ENCODE measurements at regions of chr5 and their contacts with region 1.

Region 1: GRCh38 chr5:148730943-148731861 is 76.9 kb upstream of the HTR4 start:
- DNase-seq: no peak
- H3K4me3 ChIP-seq: no peak overlapping the region
- H3K27ac ChIP-seq: no peak overlapping the region
- H3K4me1 ChIP-seq: peaks cover 0 to 23% (median 20%) of the 10 kb centered on the region in 4 donors
- H3K27me3 ChIP-seq: no peaks in the 10 kb centered on the region
- CTCF ChIP-seq: peak; percentile 83 to 95 (median 92)
- EP300 ChIP-seq: no peak
- POLR2A ChIP-seq: no peak

Region 2: GRCh38 chr5:147857302-147858129 is 873.7 kb before region 1 on chr5:
- intact Hi-C with region 1: loop called (anchors 5 kb)
- DNase-seq: no peak
- H3K4me3 ChIP-seq: no peak overlapping the region
- H3K27ac ChIP-seq: no peak overlapping the region
- H3K4me1 ChIP-seq: no peaks in the 10 kb centered on the region
- H3K27me3 ChIP-seq: no peaks in the 10 kb centered on the region
- CTCF ChIP-seq: peak; percentile 54 to 81 (median 77)
- EP300 ChIP-seq: no peak
- POLR2A ChIP-seq: no peak

Region 3: DNA sequence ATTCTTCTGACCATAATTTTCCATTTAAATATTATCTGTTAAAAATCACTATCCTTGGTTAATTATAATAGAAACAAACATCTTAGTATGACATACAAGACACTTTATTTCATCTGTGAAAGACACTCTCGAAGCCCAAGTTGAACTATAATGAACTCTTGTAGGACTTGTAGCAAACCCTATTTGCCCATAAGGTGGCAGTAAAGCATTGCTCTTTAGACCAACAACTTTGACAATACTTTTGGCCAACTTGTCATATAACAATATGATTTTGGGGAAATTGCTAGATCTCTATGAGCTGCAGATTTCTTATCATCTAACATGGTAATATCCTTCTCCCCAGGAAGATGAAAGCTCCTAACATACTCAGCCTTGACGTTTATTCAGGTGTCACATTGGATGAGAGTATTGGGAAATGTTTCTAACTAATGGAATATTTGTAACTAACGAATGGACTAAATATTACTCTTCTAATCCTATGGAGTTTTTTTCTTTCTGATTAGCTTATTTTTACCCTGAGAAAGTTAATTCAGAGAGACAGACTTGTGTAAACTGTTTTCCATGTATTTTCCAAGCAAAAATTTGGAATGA is 551.9 kb before region 1 on chr5:
- intact Hi-C with region 1: loop called (anchors 5 kb)
- DNase-seq: no peak
- H3K4me3 ChIP-seq: no peak overlapping the region
- H3K27ac ChIP-seq: no peak overlapping the region
- H3K4me1 ChIP-seq: no peaks in the 10 kb centered on the region
- H3K27me3 ChIP-seq: peaks cover 0 to 6% (median 0%) of the 10 kb centered on the region in 4 donors
- CTCF ChIP-seq: peak; percentile 32 to 69 (median 48)
- EP300 ChIP-seq: no peak
- POLR2A ChIP-seq: no peak

Region 4: GRCh38 chr5:148443998-148444397 is 287.2 kb before region 1 on chr5:
- intact Hi-C with region 1: loop called (anchors 1 kb)
- DNase-seq: no peak
- H3K4me3 ChIP-seq: no peak overlapping the region
- H3K27ac ChIP-seq: no peak overlapping the region
- H3K4me1 ChIP-seq: peaks cover 0 to under 1% (median 0%) of the 10 kb centered on the region in 4 donors
- H3K27me3 ChIP-seq: no peaks in the 10 kb centered on the region
- CTCF ChIP-seq: peak; percentile 70 to 74 (median 74)
- EP300 ChIP-seq: no peak
- POLR2A ChIP-seq: no peak

Region 5: GRCh38 chr5:148922606-148923005 is 191.4 kb after region 1 on chr5:
- intact Hi-C with region 1: no loop called
- DNase-seq: no peak
- H3K4me3 ChIP-seq: no peak overlapping the region
- H3K27ac ChIP-seq: no peak overlapping the region
- H3K4me1 ChIP-seq: peaks cover 0 to 20% (median 5%) of the 10 kb centered on the region in 4 donors
- H3K27me3 ChIP-seq: no peaks in the 10 kb centered on the region
- CTCF ChIP-seq: no peak
- EP300 ChIP-seq: no peak
- POLR2A ChIP-seq: no peak

Region 6: DNA sequence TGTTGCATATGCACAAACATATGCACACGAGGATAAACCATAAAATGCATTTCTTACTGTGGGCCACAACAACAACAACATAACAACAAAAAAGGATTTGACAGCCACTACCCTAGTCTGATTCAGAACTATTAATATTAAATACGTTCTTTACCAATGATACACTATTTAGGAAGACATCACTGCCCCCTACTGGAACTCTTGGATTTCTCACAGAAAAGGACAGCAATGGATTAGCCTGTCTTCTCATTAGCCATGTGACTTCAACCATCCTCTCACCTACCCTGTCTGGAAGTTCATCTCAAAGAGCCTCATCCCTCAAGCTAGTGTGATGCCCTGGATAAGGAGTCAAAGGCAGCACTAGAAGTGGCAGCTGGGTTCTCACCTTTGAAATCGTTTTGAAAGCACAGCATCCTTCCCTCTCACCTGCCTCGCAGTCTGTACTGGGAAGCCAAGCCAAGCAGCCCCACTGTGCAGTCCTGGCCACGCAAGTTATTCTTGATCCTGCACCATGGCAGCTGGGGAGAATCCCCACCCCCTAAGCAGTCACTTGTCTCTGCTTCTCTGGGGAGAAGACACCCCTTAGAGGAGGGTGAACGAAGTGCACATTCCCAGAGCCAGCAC is 267.1 kb after region 1 on chr5:
- intact Hi-C with region 1: loop called (anchors 5 kb)
- DNase-seq: peak; percentile 39
- H3K4me3 ChIP-seq: no peak overlapping the region
- H3K27ac ChIP-seq: no peak overlapping the region
- H3K4me1 ChIP-seq: peaks cover 0 to 21% (median 9%) of the 10 kb centered on the region in 4 donors
- H3K27me3 ChIP-seq: no peaks in the 10 kb centered on the region
- CTCF ChIP-seq: peak; percentile 50 to 66 (median 54)
- EP300 ChIP-seq: no peak
- POLR2A ChIP-seq: no peak

Region 7: GRCh38 chr5:149035372-149035790 is 304.2 kb after region 1 on chr5:
- intact Hi-C with region 1: loop called (anchors 1 kb)
- DNase-seq: peak; percentile 92
- H3K4me3 ChIP-seq: no peak overlapping the region
- H3K27ac ChIP-seq: no peak overlapping the region
- H3K4me1 ChIP-seq: peaks cover 0 to 7% (median 3%) of the 10 kb centered on the region in 4 donors
- H3K27me3 ChIP-seq: no peaks in the 10 kb centered on the region
- CTCF ChIP-seq: peak; percentile 77 to 86 (median 84)
- EP300 ChIP-seq: no peak
- POLR2A ChIP-seq: no peak

Region 8: DNA sequence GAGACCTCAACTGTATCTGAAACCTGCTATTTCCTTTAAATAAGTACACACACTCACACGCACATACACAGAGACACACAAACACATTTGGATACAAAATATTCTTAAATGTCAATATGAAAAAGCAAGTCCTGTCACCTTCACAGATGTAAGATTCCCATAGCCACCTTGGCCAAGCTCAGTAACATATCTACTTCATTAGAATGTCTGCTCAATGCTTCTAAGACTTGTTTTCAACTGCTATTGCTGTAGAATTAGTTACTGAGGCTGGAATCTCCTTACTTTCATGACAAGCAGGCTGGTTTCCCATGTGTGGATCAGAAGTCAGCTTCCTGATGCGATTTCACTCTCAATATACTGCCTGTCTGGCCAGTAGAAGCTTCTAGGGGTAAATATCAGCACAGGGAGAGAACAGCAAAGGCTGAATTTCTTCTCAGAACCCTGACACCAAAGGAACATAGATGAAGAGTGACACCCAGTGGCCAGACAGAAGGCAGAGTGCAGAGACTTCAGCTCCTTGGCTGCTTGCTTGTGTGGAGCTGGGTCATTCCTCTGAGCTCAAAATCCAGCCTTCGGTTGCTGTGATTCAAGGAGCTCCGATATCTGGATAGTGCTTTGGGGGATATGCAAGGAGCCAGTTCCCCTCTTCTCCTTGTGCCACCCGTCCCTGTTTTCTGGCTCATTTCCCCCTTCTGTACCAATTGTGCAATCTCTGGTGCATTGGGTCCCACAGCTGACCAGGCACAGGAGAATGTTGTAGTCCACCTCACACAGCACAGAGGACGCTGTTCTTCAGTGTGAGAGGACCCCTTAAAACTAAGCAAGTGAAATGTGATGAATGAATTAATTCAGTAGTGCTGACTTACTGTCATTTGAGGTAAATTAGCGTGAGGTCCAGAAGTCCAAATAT is 383.5 kb after region 1 on chr5:
- intact Hi-C with region 1: loop called (anchors 5 kb)
- DNase-seq: no peak
- H3K4me3 ChIP-seq: no peak overlapping the region
- H3K27ac ChIP-seq: no peak overlapping the region
- H3K4me1 ChIP-seq: peaks cover 0 to 6% (median 0%) of the 10 kb centered on the region in 4 donors
- H3K27me3 ChIP-seq: no peaks in the 10 kb centered on the region
- CTCF ChIP-seq: peak; percentile 47 to 73 (median 56)
- EP300 ChIP-seq: no peak
- POLR2A ChIP-seq: no peak

Measured in esophagus muscularis mucosa (tissue), 4 donors.